Activated CD8-positive, alpha-beta T cell treated with anti-CD3 and anti-CD28 coated beads, Interleukin-2, amount 10 ng/mL, durations not matched to agents 7 days and 5 days (primary cell): ENCODE measurements at regions of chr1 and their contacts with region 1.

Region 1: GRCh38 chr1:108886292-108886691 is 9.5 kb downstream of the GPSM2 start:
- DNase-seq: no peak
- ATAC-seq: no peak
- H3K4me3 Mint-ChIP-seq: no peak overlapping the region
- H3K27ac Mint-ChIP-seq: no peak overlapping the region
- H3K4me1 Mint-ChIP-seq: peaks cover 2% of the 10 kb centered on the region
- H3K27me3 Mint-ChIP-seq: no peaks in the 10 kb centered on the region

Region 2: DNA sequence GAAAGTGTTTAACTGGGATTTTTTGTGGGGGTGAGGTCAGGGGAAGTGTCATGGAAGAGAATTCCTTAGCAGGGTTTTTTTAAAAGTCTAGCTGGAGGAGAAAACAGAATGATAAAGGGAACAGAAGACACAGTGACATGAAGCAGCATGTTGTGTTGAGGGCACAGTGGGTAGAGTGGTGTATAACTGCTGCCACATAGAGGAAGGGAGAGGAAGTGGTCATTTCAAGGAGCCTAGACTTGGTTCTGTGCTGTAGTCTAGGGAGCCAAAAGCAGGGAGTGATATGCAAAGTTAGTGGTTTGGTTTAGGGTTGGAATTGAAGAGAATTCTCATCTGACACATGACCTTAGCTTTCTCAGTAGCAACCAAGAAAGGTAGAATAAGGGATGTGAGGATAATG is 316.2 kb before region 1 on chr1:
- CTCF ChIA-PET with region 1: no interaction called
- POLR2A ChIA-PET with region 1: no interaction called
- DNase-seq: peak; percentile 60
- ATAC-seq: peak; percentile 99
- H3K4me3 Mint-ChIP-seq: no peak overlapping the region
- H3K27ac Mint-ChIP-seq: no peak overlapping the region
- H3K4me1 Mint-ChIP-seq: peaks cover 4% of the 10 kb centered on the region
- H3K27me3 Mint-ChIP-seq: no peaks in the 10 kb centered on the region

Region 3: DNA sequence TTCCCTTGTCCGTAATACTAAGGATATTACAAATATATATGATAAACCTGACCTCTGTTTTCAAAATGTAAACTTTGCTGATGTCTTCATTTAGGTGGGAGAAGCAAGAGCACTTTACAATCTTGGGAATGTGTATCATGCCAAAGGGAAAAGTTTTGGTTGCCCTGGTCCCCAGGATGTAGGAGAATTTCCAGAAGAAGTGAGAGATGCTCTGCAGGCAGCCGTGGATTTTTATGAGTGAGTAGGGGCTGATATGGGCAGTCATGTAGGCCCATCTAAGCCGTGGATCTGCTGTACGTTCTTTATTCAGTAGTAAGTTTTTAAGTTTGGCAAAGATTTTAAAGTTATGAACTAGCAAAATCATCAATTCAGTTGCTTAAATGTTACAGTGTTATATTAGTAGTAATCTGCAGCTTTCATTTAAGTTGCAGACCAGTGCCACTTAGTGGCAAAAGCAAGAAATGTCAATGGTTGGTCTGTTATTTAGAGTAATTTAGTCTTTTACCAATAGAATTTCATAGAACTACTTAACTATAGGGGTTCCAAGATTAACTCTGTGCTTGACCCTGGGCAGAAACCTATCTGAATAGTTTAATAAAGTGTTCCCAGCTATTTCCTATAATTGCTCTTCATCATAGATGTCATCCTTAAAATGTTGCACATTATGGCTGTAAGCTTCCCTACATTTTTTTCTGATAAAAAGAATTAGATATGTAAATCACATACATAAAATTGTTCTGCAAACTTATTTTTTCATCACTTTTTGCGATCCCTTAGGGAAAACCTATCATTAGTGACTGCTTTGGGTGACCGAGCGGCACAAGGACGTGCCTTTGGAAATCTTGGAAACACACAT is 11.8 kb after region 1 on chr1:
- CTCF ChIA-PET with region 1: interaction called, 21 read pairs
- POLR2A ChIA-PET with region 1: no interaction called
- DNase-seq: peak; percentile 59
- ATAC-seq: peak; percentile 76
- H3K4me3 Mint-ChIP-seq: no peak overlapping the region
- H3K27ac Mint-ChIP-seq: no peak overlapping the region
- H3K4me1 Mint-ChIP-seq: peaks cover 2% of the 10 kb centered on the region
- H3K27me3 Mint-ChIP-seq: no peaks in the 10 kb centered on the region

Region 4: DNA sequence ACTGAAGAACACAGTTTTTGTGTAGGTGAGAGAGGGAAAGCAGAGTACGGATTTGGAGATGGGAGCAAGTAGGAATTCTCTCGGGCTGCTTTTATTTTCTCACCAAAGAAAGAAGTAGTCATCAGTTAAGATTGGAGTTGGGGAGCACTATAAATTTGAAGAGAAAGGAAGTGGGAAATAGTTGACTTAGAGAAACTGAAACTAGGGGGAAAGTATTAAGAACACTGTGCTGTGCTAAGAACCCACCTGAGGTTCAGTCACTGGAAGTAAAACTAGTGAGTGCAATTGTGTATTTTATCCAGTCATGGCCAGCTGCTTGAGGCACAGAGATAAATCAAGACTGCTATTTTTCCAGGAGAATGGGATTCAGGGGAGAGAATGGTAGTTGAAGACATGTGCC is 39.6 kb after region 1 on chr1:
- CTCF ChIA-PET with region 1: no interaction called
- POLR2A ChIA-PET with region 1: no interaction called
- DNase-seq: no peak
- ATAC-seq: peak; percentile 36
- H3K4me3 Mint-ChIP-seq: no peak overlapping the region
- H3K27ac Mint-ChIP-seq: no peak overlapping the region
- H3K4me1 Mint-ChIP-seq: no peaks in the 10 kb centered on the region
- H3K27me3 Mint-ChIP-seq: no peaks in the 10 kb centered on the region